ENCODE measurements at regions of chr5 and their contacts with region 1.

Region 1: GRCh38 chr5:91383027-91383955 is at the start of gene ARRDC3:
- DNase-seq: peak; percentile 98
- H3K4me3 ChIP-seq: peak within 1 kb of the TSS; percentile 84
- H3K27ac ChIP-seq: peak within 1 kb of the TSS; percentile 88
- H3K4me1 ChIP-seq: peaks cover 20% of the 10 kb centered on the region
- H3K27me3 ChIP-seq: no peaks in the 10 kb centered on the region
- CTCF ChIP-seq: no peak
- total RNA-seq, gene ARRDC3: 41.3 and 46.3 TPM in 2 replicates

Region 2: GRCh38 chr5:90932052-90932699 is 451.1 kb before region 1 on chr5:
- CTCF ChIA-PET with region 1: interaction called, 13 read pairs
- POLR2A ChIA-PET with region 1: interaction called, 23 read pairs
- intact Hi-C with region 1: loop called (anchors 1 kb)
- DNase-seq: peak; percentile 82
- H3K4me3 ChIP-seq: no peak overlapping the region
- H3K27ac ChIP-seq: peak overlapping the region; percentile 2
- H3K4me1 ChIP-seq: peaks cover 11% of the 10 kb centered on the region
- H3K27me3 ChIP-seq: no peaks in the 10 kb centered on the region
- CTCF ChIP-seq: peak; percentile 85

Region 3: GRCh38 chr5:91101600-91102379 is 281.5 kb before region 1 on chr5:
- CTCF ChIA-PET with region 1: no interaction called
- POLR2A ChIA-PET with region 1: no interaction called
- intact Hi-C with region 1: loop called (anchors 1 kb)
- DNase-seq: peak; percentile 92
- H3K4me3 ChIP-seq: no peak overlapping the region
- H3K27ac ChIP-seq: no peak overlapping the region
- H3K4me1 ChIP-seq: peaks cover 7% of the 10 kb centered on the region
- H3K27me3 ChIP-seq: no peaks in the 10 kb centered on the region
- CTCF ChIP-seq: peak; percentile 85

Region 4: DNA sequence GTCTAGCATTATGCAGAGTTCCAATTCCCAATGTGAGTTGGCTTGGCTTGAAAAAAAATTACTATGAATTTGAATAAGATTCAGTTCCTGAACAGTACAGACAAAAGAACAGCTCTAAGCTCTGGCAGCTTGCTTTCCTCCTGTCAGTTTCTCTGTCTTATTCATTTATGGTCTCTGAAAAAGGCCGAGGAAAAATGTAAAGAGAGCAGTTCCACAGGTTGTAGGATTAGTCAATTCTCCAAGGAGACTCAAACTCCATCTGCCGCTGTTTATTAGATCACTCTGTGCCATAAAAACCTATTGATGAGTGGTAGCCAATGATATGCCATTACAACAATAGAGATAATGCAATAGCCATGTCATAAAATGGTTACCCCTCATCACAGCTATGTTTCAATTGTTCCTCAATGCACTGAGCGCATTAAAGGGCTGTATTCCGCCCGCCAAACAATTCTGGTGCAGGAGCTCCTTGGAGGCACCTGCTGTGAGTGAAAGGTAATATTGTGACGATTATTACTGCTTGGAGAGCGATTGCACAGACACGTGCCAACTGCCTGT is 188.4 kb before region 1 on chr5:
- CTCF ChIA-PET with region 1: no interaction called
- POLR2A ChIA-PET with region 1: no interaction called
- intact Hi-C with region 1: no loop called
- DNase-seq: no peak
- H3K4me3 ChIP-seq: no peak overlapping the region
- H3K27ac ChIP-seq: no peak overlapping the region
- H3K4me1 ChIP-seq: no peaks in the 10 kb centered on the region
- H3K27me3 ChIP-seq: no peaks in the 10 kb centered on the region
- CTCF ChIP-seq: no peak

Region 5: GRCh38 chr5:91212714-91213092 is 170.6 kb before region 1 on chr5:
- CTCF ChIA-PET with region 1: no interaction called
- POLR2A ChIA-PET with region 1: interaction called, 3 read pairs
- intact Hi-C with region 1: loop called (anchors 5 kb)
- DNase-seq: peak; percentile 85
- H3K4me3 ChIP-seq: no peak overlapping the region
- H3K27ac ChIP-seq: peak overlapping the region; percentile 68
- H3K4me1 ChIP-seq: peaks cover 27% of the 10 kb centered on the region
- H3K27me3 ChIP-seq: no peaks in the 10 kb centered on the region
- CTCF ChIP-seq: no peak

Region 6: GRCh38 chr5:91255396-91256141 is 127.7 kb before region 1 on chr5:
- CTCF ChIA-PET with region 1: interaction called, 10 read pairs
- POLR2A ChIA-PET with region 1: no interaction called
- intact Hi-C with region 1: no loop called
- DNase-seq: no peak
- H3K4me3 ChIP-seq: no peak overlapping the region
- H3K27ac ChIP-seq: no peak overlapping the region
- H3K4me1 ChIP-seq: no peaks in the 10 kb centered on the region
- H3K27me3 ChIP-seq: no peaks in the 10 kb centered on the region
- CTCF ChIP-seq: no peak

Region 7: GRCh38 chr5:91419571-91420537 is 36.6 kb after region 1 on chr5:
- CTCF ChIA-PET with region 1: interaction called, 17 read pairs
- POLR2A ChIA-PET with region 1: no interaction called
- intact Hi-C with region 1: no loop called
- DNase-seq: peak; percentile 86
- H3K4me3 ChIP-seq: no peak overlapping the region
- H3K27ac ChIP-seq: no peak overlapping the region
- H3K4me1 ChIP-seq: peaks cover 31% of the 10 kb centered on the region
- H3K27me3 ChIP-seq: no peaks in the 10 kb centered on the region
- CTCF ChIP-seq: peak; percentile 71

Measured in A673 (cell line).